Left cardiac atrium (tissue), 4 donors: ENCODE measurements at regions of chr14 and their contacts with region 1.

Region 1: DNA sequence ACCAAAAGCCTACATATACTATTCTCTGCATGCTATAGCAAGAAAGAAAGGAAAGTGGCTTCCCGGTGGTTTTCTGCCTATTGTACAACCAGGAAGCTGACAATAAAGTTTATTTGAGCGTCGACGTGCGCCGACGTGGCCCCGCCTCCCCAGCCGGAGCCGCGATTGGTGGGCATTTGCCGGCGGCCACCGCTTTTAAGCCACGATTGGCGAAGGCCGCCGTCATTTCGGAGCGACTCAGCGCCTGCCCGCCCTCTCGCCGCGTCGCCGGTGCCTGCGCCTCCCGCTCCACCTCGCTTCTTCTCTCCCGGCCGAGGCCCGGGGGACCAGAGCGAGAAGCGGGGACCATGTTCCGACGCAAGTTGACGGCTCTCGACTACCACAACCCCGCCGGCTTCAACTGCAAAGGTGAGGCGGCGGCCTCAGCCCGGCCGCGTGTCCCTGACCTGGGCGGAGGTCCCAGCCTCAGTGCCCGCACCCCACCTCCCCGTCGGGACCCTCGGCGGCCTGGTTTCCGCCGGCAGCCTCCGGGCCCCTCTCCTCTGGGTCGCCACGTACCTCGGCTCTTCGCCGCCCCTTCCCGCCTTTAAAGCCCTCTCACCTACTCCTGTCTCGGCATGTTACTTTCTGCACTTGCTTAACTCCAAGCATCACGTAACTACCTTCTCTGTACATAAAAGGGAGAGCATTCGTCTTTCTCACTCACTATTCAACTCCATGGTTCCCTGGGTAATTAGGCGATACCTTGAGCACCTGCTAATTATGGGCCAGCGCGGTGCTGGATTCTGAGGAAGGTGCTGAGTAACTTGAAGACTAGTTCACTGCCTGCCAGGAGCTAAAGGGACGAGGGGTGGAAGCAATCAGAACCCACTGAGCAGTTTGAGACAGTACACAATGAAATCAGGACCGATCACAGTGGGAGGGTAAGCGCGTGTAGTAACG is at the start of gene RTRAF:
- DNase-seq: peak; percentile 97
- ATAC-seq: peak; percentile 99 to 100
- total RNA-seq, gene RTRAF: 172 to 187 TPM

Region 2: GRCh38 chr14:52131640-52132320 is 142.2 kb after region 1 on chr14:
- intact Hi-C with region 1: loop called (anchors 2 kb)
- DNase-seq: peak; percentile 84
- ATAC-seq: peak; percentile 92

Region 3: DNA sequence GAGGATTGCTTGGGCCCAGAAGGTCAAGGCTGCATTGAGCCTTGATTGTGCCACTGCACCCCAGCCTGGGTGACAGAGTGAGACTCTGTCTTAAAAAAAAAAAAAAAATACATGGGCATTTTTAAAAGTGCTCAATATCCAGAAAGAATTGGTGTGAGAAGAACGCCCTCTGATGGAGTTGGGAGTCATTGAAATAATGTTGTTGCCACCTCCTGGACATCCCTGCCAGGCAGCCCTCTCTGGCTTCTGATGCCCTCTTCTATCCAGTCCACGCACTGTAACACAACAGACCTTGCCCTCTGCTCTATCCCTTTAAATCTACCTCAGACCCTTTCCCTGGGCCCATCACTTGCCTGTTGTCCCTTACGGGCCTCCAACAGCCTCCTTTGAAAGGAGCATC is 282.8 kb after region 1 on chr14:
- intact Hi-C with region 1: loop called in 1 of 2 experiments (anchors 10 kb)
- DNase-seq: no peak
- ATAC-seq: no peak